Activated CD4-positive, alpha-beta memory T cell treated with anti-CD3 and anti-CD28 coated beads for 36 hours (primary cell): ENCODE measurements at regions of chr16 and their contacts with region 1.

Region 1: GRCh38 chr16:68590201-68590994 is 51.3 kb downstream of the ZFP90 start:
- DNase-seq: peak; percentile 83
- H3K4me3 Mint-ChIP-seq: no peak overlapping the region
- H3K27ac Mint-ChIP-seq: no peak overlapping the region
- H3K4me1 Mint-ChIP-seq: peaks cover 2% of the 10 kb centered on the region
- H3K27me3 Mint-ChIP-seq: peaks cover 1% of the 10 kb centered on the region

Region 2: DNA sequence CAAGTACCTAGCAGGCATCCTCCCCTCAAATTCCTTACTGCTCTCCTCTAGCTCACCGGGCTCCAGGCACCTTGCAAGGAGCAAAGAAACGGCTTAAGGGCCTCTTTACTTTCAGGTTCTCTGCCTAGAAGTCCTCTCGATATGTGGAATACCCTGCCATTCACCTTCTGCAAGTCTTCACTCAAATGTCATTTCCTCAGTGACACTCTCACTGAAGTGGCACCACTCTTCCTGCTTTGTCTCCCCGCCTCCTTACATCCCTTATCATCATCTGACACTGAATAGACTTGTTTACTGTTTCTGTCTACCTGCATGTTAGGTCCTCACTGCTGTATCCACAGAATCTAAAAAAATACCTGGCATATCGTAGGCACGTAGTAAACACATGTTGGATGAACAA is 280.6 kb before region 1 on chr16:
- CTCF ChIA-PET with region 1: no interaction called
- POLR2A ChIA-PET with region 1: no interaction called
- intact Hi-C with region 1: no loop called
- DNase-seq: no peak
- H3K4me3 Mint-ChIP-seq: peak overlapping the region; percentile 89
- H3K27ac Mint-ChIP-seq: peak overlapping the region; percentile 93
- H3K4me1 Mint-ChIP-seq: peaks cover 46% of the 10 kb centered on the region
- H3K27me3 Mint-ChIP-seq: no peaks in the 10 kb centered on the region

Region 3: DNA sequence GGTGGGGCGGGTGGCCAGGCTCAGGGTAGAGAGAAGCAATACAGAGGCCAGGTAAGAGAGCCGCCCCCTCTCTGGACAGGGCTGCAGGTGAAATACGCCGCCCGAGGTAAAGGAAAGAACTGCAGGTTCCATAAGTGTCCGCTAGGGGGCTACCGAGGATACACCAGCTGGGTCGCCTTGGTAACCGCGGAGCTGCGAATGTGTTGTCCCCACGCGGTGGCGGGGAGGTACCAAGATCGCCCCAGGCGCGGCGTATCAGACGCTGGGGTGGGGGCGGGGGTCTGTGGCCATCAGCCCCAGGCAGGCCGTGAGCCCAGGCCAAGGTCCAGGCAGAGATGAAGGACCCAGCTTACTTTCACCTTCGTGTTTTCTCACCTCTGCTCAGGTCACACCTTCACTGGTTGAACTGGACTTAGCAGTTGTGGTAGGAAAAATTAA is 69.7 kb before region 1 on chr16:
- CTCF ChIA-PET with region 1: interaction called, 15 read pairs
- POLR2A ChIA-PET with region 1: no interaction called
- intact Hi-C with region 1: no loop called
- DNase-seq: peak; percentile 92
- H3K4me3 Mint-ChIP-seq: no peak overlapping the region
- H3K27ac Mint-ChIP-seq: no peak overlapping the region
- H3K4me1 Mint-ChIP-seq: peaks cover 6% of the 10 kb centered on the region
- H3K27me3 Mint-ChIP-seq: peaks cover 1% of the 10 kb centered on the region

Region 4: GRCh38 chr16:68704232-68704867 is 114.0 kb after region 1 on chr16:
- CTCF ChIA-PET with region 1: interaction called, 7 read pairs
- POLR2A ChIA-PET with region 1: no interaction called
- intact Hi-C with region 1: loop called (anchors 5 kb)
- DNase-seq: peak; percentile 82
- H3K4me3 Mint-ChIP-seq: no peak overlapping the region
- H3K27ac Mint-ChIP-seq: no peak overlapping the region
- H3K4me1 Mint-ChIP-seq: peaks cover 11% of the 10 kb centered on the region
- H3K27me3 Mint-ChIP-seq: peaks cover 3% of the 10 kb centered on the region

Region 5: GRCh38 chr16:68806422-68806975 is 216.1 kb after region 1 on chr16:
- CTCF ChIA-PET with region 1: interaction called, 53 read pairs
- POLR2A ChIA-PET with region 1: no interaction called
- intact Hi-C with region 1: loop called (anchors 2 kb)
- DNase-seq: no peak
- H3K4me3 Mint-ChIP-seq: no peak overlapping the region
- H3K27ac Mint-ChIP-seq: no peak overlapping the region
- H3K4me1 Mint-ChIP-seq: no peaks in the 10 kb centered on the region
- H3K27me3 Mint-ChIP-seq: peaks cover 3% of the 10 kb centered on the region

Region 6: GRCh38 chr16:69123910-69124309 is 533.5 kb after region 1 on chr16:
- CTCF ChIA-PET with region 1: interaction called, 11 read pairs
- POLR2A ChIA-PET with region 1: no interaction called
- intact Hi-C with region 1: no loop called
- DNase-seq: peak; percentile 57
- H3K4me3 Mint-ChIP-seq: no peak overlapping the region
- H3K27ac Mint-ChIP-seq: no peak overlapping the region
- H3K4me1 Mint-ChIP-seq: peaks cover 26% of the 10 kb centered on the region
- H3K27me3 Mint-ChIP-seq: no peaks in the 10 kb centered on the region